Gastrocnemius medialis (tissue), 4 donors: ENCODE measurements at regions of chr1 and their contacts with region 1.

Region 1: GRCh38 chr1:221741711-221742554 is at the start of gene DUSP10:
- DNase-seq: peak; percentile 99 to 100
- ATAC-seq: peak; percentile 85 to 89
- H3K4me3 ChIP-seq: peak within 1 kb of the TSS; percentile 71 to 93 (median 82)
- H3K27ac ChIP-seq: peak within 1 kb of the TSS; percentile 95 to 99 (median 98)
- H3K4me1 ChIP-seq: peaks cover 44 to 45% of the 10 kb centered on the region in 2 donors
- H3K27me3 ChIP-seq: no peaks in the 10 kb centered on the region
- CTCF ChIP-seq: peak in 1 of 5 experiments; percentile 14
- POLR2A ChIP-seq: peak; percentile 65 to 95
- total RNA-seq, gene DUSP10: 2.9 to 7.0 (median 5.9) TPM

Region 2: DNA sequence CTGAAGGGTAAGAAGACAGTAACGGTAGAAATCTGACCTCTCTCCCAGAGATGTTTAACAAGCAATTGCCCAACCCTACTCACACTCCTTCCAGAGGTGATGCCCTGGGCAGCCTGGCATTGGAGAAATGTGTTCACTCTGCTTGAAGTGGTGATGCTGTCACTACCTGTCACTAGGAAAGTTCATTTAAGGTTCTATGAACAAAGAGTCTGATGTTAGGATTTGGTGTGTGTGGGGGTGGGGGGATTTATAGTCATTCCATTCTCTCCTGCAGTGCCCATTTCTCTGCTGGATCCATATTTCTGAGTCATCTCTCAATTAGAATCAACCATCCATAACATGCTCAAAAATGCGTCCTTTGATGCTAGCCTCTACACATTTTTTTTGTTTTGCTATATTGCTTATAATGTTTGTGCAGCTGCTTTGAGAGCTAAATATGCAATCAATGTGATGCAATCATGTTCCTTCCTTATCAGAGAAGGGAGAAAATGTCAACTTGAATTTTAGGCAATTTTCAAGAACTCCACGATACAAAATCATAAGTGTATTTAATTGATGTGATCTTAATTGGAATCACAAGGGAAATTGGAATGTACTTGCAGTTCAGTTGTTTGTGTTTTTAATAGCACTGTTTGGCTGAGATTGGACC is 173.9 kb before region 1 on chr1:
- in situ Hi-C with region 1: loop called in 1 of 4 experiments (anchors 25 kb)
- intact Hi-C with region 1: loop called (anchors 1 kb)
- DNase-seq: no peak
- ATAC-seq: no peak
- H3K4me3 ChIP-seq: no peak overlapping the region
- H3K27ac ChIP-seq: no peak overlapping the region
- H3K4me1 ChIP-seq: peaks cover 16 to 36% of the 10 kb centered on the region in 2 donors
- H3K27me3 ChIP-seq: no peaks in the 10 kb centered on the region
- CTCF ChIP-seq: no peak
- POLR2A ChIP-seq: no peak

Region 3: GRCh38 chr1:221708987-221709386 is 32.9 kb before region 1 on chr1:
- in situ Hi-C with region 1: no loop called
- intact Hi-C with region 1: loop called (anchors 2 kb)
- DNase-seq: peak in 1 of 2 donors; percentile 38
- ATAC-seq: peak; percentile 14 to 37
- H3K4me3 ChIP-seq: no peak overlapping the region
- H3K27ac ChIP-seq: peak overlapping the region; percentile 74 to 78 (median 77)
- H3K4me1 ChIP-seq: peaks cover 65 to 70% of the 10 kb centered on the region in 2 donors
- H3K27me3 ChIP-seq: no peaks in the 10 kb centered on the region
- CTCF ChIP-seq: no peak
- POLR2A ChIP-seq: no peak

Region 4: GRCh38 chr1:221886743-221887413 is 144.9 kb after region 1 on chr1:
- in situ Hi-C with region 1: no loop called
- intact Hi-C with region 1: loop called (anchors 5 kb)
- DNase-seq: peak; percentile 68 to 85
- ATAC-seq: peak; percentile 88 to 92
- H3K4me3 ChIP-seq: peak overlapping the region in 1 of 4 donors; percentile 11
- H3K27ac ChIP-seq: peak overlapping the region; percentile 59 to 72 (median 66)
- H3K4me1 ChIP-seq: peaks cover 22 to 23% of the 10 kb centered on the region in 2 donors
- H3K27me3 ChIP-seq: no peaks in the 10 kb centered on the region
- CTCF ChIP-seq: no peak
- POLR2A ChIP-seq: no peak

Region 5: DNA sequence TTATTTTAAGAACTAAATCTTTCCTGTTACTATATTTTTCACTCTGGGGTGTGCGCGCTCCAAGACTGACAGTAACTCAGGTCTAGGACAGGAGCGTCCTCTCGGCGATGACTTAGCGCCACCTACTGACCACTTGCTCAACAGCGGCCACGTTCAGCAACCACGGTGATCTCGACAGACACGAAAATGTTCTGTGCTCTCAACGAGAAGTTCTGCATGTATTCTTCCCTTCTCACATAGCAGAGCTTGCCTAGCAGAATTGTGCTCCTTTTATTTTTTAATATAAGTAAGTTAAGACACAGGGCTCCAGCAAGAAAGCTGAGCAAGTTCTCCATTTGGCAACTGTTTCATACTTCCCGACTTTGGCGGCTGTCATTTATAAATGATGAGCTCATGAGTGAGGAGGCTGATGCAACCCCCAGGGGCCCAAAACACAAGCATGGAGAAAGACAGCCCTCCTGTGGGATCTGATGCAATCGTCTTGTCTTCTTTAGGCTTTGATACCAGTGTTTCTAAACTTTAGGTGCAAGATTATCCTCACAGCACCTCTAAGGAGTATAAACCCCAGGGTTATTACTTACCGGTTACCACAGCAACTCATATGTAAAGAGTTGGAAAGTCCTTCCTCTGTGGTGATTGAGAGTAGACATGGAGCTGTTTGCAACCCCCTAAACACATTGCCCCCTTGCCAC is 713.4 kb after region 1 on chr1:
- in situ Hi-C with region 1: loop called in 2 of 4 experiments (anchors 25 kb)
- intact Hi-C with region 1: loop called (anchors 5 kb)
- DNase-seq: peak; percentile 66 to 76
- ATAC-seq: peak; percentile 95 to 97
- H3K4me3 ChIP-seq: peak overlapping the region; percentile 23 to 40 (median 36)
- H3K27ac ChIP-seq: peak overlapping the region; percentile 58 to 76 (median 68)
- H3K4me1 ChIP-seq: peaks cover 18 to 23% of the 10 kb centered on the region in 2 donors
- H3K27me3 ChIP-seq: no peaks in the 10 kb centered on the region
- CTCF ChIP-seq: peak; percentile 77 to 94 (median 88)
- POLR2A ChIP-seq: no peak